ENCODE measurements at regions of chr3 and their contacts with region 1.

Region 1: GRCh38 chr3:32238453-32239306 is at the start of gene CMTM8:
- DNase-seq: peak; percentile 46 to 70 (median 67)
- ATAC-seq: peak; percentile 89
- H3K4me3 ChIP-seq: peak within 1 kb of the TSS; percentile 81
- H3K4me3 Mint-ChIP-seq: peak within 1 kb of the TSS; percentile 88 to 93 (median 90)
- H3K27ac ChIP-seq: peak within 1 kb of the TSS; percentile 64
- H3K27ac Mint-ChIP-seq: peak within 1 kb of the TSS; percentile 58 to 82 (median 74)
- H3K4me1 ChIP-seq: peaks cover 13 to 17% of the 10 kb centered on the region in 2 donors
- H3K4me1 Mint-ChIP-seq: peaks cover 37 to 58% (median 50%) of the 10 kb centered on the region in 7 donors
- H3K27me3 ChIP-seq: no peaks in the 10 kb centered on the region
- H3K27me3 Mint-ChIP-seq: peaks cover 0 to 25% (median 0%) of the 10 kb centered on the region in 5 donors
- total RNA-seq, gene CMTM8: 7.4 to 13.6 (median 8.6) TPM

Region 2: DNA sequence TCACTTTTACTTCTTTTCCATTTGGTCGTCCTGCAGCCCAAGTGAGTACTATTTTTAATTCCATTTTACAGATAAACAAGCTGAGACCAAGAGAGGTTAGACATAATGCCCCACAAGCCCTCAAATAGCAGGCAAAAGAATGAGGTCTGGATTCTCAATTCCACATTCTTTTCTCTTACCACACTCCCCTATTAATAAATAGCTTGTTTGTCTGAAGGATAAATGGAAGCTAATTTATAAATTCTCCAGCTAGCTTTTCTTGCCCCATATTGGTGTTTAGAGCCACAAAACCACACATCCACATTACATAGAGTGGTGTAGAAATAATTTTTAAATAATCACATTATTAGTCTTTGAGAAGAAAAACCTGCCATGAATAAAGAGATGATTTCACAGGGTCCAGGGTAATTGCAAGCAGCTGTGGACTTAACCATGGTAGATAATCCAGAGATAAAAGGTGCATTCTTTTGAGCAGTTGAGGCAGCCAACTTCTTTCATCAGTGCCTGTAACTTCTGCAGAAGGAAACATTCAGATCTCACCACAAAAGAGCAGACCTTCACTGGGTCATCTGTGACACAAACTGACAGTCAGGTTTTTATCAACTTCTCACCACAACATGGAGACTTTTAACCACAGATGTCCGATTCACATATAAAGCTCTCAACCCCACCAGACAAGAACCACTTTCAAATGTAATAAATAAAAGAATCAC is 1019.4 kb before region 1 on chr3:
- CTCF ChIA-PET with region 1: no interaction called
- POLR2A ChIA-PET with region 1: no interaction called
- intact Hi-C with region 1: no loop called
- DNase-seq: no peak
- ATAC-seq: peak; percentile 44
- H3K4me3 ChIP-seq: no peak overlapping the region
- H3K4me3 Mint-ChIP-seq: peak overlapping the region in 6 of 10 donors; percentile 2 to 54 (median 30)
- H3K27ac ChIP-seq: no peak overlapping the region
- H3K27ac Mint-ChIP-seq: peak overlapping the region in 4 of 9 donors; percentile 26 to 52 (median 42)
- H3K4me1 ChIP-seq: peaks cover 50 to 66% of the 10 kb centered on the region in 2 donors
- H3K4me1 Mint-ChIP-seq: peaks cover 64 to 98% (median 96%) of the 10 kb centered on the region in 7 donors
- H3K27me3 ChIP-seq: no peaks in the 10 kb centered on the region
- H3K27me3 Mint-ChIP-seq: peaks cover 0 to 2% (median 0%) of the 10 kb centered on the region in 5 donors

Region 3: DNA sequence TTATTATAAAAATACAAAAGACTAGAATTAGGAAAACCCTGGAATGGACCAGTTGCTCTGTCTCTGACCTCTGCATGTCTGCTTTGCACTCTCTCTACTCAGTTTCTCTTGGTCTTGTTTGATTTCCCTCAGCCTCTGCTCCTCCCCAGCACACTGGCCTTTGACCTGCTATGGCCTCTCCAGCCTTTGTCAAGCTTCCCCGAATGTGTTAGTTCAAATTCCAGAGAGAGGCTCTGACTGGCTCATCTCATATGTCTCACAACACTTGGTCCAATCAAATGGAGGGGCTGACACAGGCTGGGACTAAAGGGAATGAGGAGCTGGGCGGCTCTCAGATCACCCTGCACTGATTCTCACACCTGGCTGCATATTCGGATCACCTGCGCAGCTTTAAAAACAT is 52.6 kb before region 1 on chr3:
- CTCF ChIA-PET with region 1: no interaction called
- POLR2A ChIA-PET with region 1: no interaction called
- intact Hi-C with region 1: no loop called
- DNase-seq: no peak
- ATAC-seq: no peak
- H3K4me3 ChIP-seq: no peak overlapping the region
- H3K4me3 Mint-ChIP-seq: no peak overlapping the region
- H3K27ac ChIP-seq: no peak overlapping the region
- H3K27ac Mint-ChIP-seq: no peak overlapping the region
- H3K4me1 ChIP-seq: no peaks in the 10 kb centered on the region
- H3K4me1 Mint-ChIP-seq: no peaks in the 10 kb centered on the region
- H3K27me3 ChIP-seq: no peaks in the 10 kb centered on the region
- H3K27me3 Mint-ChIP-seq: peaks cover 4 to 37% (median 9%) of the 10 kb centered on the region in 5 donors

Region 4: GRCh38 chr3:32285891-32286290 is 47.2 kb after region 1 on chr3:
- CTCF ChIA-PET with region 1: interaction called, 32 read pairs
- POLR2A ChIA-PET with region 1: interaction called, 30 read pairs
- intact Hi-C with region 1: loop called in 1 of 2 experiments (anchors 1 kb)
- DNase-seq: no peak
- ATAC-seq: peak; percentile 11
- H3K4me3 ChIP-seq: no peak overlapping the region
- H3K4me3 Mint-ChIP-seq: peak overlapping the region in 8 of 10 donors; percentile 22 to 73 (median 56)
- H3K27ac ChIP-seq: peak overlapping the region; percentile 45
- H3K27ac Mint-ChIP-seq: peak overlapping the region; percentile 72 to 94 (median 78)
- H3K4me1 ChIP-seq: peaks cover 0 to 12% of the 10 kb centered on the region in 2 donors
- H3K4me1 Mint-ChIP-seq: peaks cover 19 to 65% (median 38%) of the 10 kb centered on the region in 7 donors
- H3K27me3 ChIP-seq: no peaks in the 10 kb centered on the region
- H3K27me3 Mint-ChIP-seq: no peaks in the 10 kb centered on the region

Region 5: DNA sequence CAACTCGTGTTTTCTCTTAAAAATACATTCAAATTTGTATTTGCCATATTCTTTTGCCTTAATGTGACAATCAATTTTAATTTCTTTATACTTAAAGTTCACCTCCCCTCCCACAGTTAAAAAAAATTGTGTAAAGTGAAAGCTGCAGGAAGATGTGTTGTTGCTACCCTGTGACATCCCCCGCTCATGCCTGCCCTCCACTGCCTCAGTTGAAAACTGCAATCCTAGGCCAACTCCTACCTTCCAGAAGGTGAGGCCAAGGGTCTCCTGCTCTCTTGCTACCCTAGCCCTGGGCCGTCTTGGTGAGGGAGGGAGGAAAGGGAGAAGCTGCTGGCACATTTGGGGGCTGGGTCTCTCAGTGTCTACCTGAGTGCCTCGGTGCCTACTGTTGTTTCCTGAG is 96.0 kb after region 1 on chr3:
- CTCF ChIA-PET with region 1: interaction called, 4 read pairs
- POLR2A ChIA-PET with region 1: interaction called, 4 read pairs
- intact Hi-C with region 1: loop called (anchors 1 kb)
- DNase-seq: peak; percentile 15 to 72 (median 65)
- ATAC-seq: peak; percentile 83
- H3K4me3 ChIP-seq: no peak overlapping the region
- H3K4me3 Mint-ChIP-seq: peak overlapping the region; percentile 5 to 87 (median 66)
- H3K27ac ChIP-seq: peak overlapping the region; percentile 49
- H3K27ac Mint-ChIP-seq: peak overlapping the region; percentile 78 to 96 (median 92)
- H3K4me1 ChIP-seq: peaks cover 0 to 32% of the 10 kb centered on the region in 2 donors
- H3K4me1 Mint-ChIP-seq: peaks cover 39 to 67% (median 60%) of the 10 kb centered on the region in 7 donors
- H3K27me3 ChIP-seq: no peaks in the 10 kb centered on the region
- H3K27me3 Mint-ChIP-seq: no peaks in the 10 kb centered on the region

Region 6: DNA sequence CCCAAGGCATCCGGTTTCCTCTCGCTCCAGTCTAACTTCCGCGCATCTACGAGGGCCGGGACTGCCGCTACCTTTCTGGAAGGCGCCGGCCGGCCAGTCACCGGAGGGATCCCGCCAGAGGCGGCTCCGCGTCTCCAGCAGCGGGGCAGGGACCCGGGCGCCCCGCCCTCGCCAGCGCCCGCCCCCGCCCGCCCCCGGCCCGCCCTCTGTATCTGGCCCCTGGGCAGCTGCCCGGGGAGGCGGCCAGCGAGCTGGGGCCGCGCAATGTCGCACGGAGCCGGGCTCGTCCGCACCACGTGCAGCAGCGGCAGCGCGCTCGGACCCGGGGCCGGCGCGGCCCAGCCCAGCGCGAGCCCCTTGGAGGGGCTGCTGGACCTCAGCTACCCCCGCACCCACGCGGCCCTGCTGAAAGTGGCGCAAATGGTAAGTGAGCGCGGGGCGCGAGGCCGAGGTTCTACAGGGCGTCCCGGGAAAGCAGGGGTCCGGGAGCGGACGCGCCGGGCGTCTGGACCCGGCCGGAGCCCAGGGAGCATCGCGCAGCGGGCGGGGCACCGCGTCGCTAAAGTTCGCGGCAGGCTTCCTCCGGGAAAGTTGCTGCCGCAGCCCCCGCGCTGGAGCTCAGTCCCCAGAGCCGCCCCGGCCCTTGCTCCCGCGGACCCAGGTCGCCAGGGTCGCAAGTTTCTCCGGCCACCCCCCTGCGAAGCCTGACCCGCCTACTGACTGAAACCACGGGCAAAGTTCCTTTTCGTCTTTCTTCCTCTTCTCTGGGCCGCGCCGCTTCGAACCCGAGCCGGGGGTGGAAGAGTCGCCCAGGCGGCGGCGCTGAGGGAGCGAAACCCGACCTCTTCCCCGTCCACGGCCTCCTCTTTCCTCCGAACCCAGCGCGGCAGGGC is 153.2 kb after region 1 on chr3 and contains the start of gene CMTM7:
- CTCF ChIA-PET with region 1: no interaction called
- POLR2A ChIA-PET with region 1: no interaction called
- intact Hi-C with region 1: loop called in 1 of 2 experiments (anchors 5 kb)
- DNase-seq: peak; percentile 33 to 68 (median 62)
- ATAC-seq: peak; percentile 75
- H3K4me3 ChIP-seq: peak within 1 kb of the TSS; percentile 81
- H3K4me3 Mint-ChIP-seq: peak within 1 kb of the TSS; percentile 84 to 99 (median 98)
- H3K27ac ChIP-seq: peak within 1 kb of the TSS; percentile 83
- H3K27ac Mint-ChIP-seq: peak within 1 kb of the TSS; percentile 93 to 100 (median 98)
- H3K4me1 ChIP-seq: peaks cover 17 to 25% of the 10 kb centered on the region in 2 donors
- H3K4me1 Mint-ChIP-seq: peaks cover 30 to 70% (median 55%) of the 10 kb centered on the region in 7 donors
- H3K27me3 ChIP-seq: no peaks in the 10 kb centered on the region
- H3K27me3 Mint-ChIP-seq: no peaks in the 10 kb centered on the region
- total RNA-seq, gene CMTM7: 38.6 to 60.1 (median 49.5) TPM

Region 7: DNA sequence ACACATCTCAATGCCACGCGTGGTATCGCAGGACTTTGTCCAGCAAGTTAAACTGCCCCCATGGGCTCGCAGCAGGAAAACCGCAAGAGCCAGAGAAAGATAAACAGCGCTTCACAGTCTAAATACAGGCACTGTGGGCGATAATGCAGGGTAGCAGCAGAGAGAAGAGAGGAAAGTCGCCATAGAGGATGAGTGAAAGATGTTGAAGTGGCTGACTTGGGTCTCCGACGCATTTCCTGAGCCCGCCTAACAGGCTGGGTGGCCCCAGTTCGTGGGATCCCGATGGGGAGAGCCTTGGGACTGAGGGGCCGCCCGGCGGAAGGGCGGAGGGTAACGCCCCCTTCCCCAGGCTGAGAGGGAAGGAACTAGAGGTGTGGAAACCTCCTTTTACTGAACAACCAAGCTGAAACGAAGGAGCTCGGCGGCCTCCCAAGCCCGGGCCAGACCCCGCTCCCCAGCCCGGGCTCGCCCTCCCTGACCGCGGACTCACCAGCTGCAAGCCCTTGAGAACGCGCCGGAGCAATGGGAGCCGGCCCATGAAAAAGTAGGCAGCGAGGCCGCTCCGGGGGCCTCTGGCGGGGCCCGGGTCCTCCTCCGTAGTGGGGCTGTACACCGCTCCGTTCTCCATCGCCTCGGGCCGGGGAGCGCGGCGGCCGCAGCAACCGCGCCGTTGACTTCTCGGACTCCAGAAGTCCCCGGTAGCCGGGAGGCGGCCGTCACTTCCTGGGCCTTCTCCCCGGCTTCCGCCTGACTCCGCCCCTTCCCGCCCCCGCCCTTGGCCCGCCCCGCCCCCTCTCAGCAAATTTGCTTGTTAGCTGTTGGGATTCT is 263.7 kb after region 1 on chr3 and contains the start of gene CMTM6:
- CTCF ChIA-PET with region 1: interaction called, 3 read pairs
- POLR2A ChIA-PET with region 1: no interaction called
- intact Hi-C with region 1: loop called (anchors 1 kb)
- DNase-seq: peak; percentile 49 to 77 (median 70)
- ATAC-seq: peak; percentile 92
- H3K4me3 ChIP-seq: peak within 1 kb of the TSS; percentile 89
- H3K4me3 Mint-ChIP-seq: peak within 1 kb of the TSS; percentile 79 to 97 (median 93)
- H3K27ac ChIP-seq: peak within 1 kb of the TSS; percentile 98
- H3K27ac Mint-ChIP-seq: peak within 1 kb of the TSS; percentile 86 to 98 (median 90)
- H3K4me1 ChIP-seq: peaks cover 6 to 23% of the 10 kb centered on the region in 2 donors
- H3K4me1 Mint-ChIP-seq: peaks cover 28 to 48% (median 43%) of the 10 kb centered on the region in 7 donors
- H3K27me3 ChIP-seq: no peaks in the 10 kb centered on the region
- H3K27me3 Mint-ChIP-seq: peaks cover 0 to 4% (median 0%) of the 10 kb centered on the region in 5 donors
- total RNA-seq, gene CMTM6: 24.1 to 61.1 (median 38.1) TPM

Measured in naive thymus-derived CD4-positive, alpha-beta T cell (primary cell).